ENCODE measurements at regions of chr15 and their contacts with region 1.

Region 1: GRCh38 chr15:73800662-73801345 is 47.7 kb upstream of the INSYN1 start:
- DNase-seq: peak; percentile 18 to 86
- H3K4me3 ChIP-seq: no peak overlapping the region
- H3K27ac ChIP-seq: peak overlapping the region; percentile 82 to 93
- H3K4me1 ChIP-seq: peaks cover 20 to 46% of the 10 kb centered on the region in 2 donors
- H3K27me3 ChIP-seq: no peaks in the 10 kb centered on the region
- CTCF ChIP-seq: no peak

Region 2: GRCh38 chr15:73753250-73754130 is 47.3 kb before region 1 on chr15 and contains the start of gene INSYN1:
- intact Hi-C with region 1: loop called (anchors 2 kb)
- DNase-seq: no peak
- H3K4me3 ChIP-seq: peak within 1 kb of the TSS; percentile 80 to 98
- H3K27ac ChIP-seq: peak within 1 kb of the TSS in 1 of 2 donors; percentile 70
- H3K4me1 ChIP-seq: peaks cover 5% of the 10 kb centered on the region in 2 donors
- H3K27me3 ChIP-seq: no peaks in the 10 kb centered on the region
- CTCF ChIP-seq: no peak
- total RNA-seq, gene INSYN1: 13.0 TPM

Region 3: GRCh38 chr15:73936181-73936580 is 135.4 kb after region 1 on chr15:
- intact Hi-C with region 1: no loop called
- DNase-seq: peak in 1 of 2 donors; percentile 80
- H3K4me3 ChIP-seq: peak overlapping the region in 1 of 2 donors; percentile 42
- H3K27ac ChIP-seq: peak overlapping the region; percentile 77 to 84
- H3K4me1 ChIP-seq: peaks cover 23 to 74% of the 10 kb centered on the region in 2 donors
- H3K27me3 ChIP-seq: no peaks in the 10 kb centered on the region
- CTCF ChIP-seq: peak in 2 of 3 experiments; percentile 37 to 46